ENCODE measurements at regions of chr1 and their contacts with region 1.

Region 1: DNA sequence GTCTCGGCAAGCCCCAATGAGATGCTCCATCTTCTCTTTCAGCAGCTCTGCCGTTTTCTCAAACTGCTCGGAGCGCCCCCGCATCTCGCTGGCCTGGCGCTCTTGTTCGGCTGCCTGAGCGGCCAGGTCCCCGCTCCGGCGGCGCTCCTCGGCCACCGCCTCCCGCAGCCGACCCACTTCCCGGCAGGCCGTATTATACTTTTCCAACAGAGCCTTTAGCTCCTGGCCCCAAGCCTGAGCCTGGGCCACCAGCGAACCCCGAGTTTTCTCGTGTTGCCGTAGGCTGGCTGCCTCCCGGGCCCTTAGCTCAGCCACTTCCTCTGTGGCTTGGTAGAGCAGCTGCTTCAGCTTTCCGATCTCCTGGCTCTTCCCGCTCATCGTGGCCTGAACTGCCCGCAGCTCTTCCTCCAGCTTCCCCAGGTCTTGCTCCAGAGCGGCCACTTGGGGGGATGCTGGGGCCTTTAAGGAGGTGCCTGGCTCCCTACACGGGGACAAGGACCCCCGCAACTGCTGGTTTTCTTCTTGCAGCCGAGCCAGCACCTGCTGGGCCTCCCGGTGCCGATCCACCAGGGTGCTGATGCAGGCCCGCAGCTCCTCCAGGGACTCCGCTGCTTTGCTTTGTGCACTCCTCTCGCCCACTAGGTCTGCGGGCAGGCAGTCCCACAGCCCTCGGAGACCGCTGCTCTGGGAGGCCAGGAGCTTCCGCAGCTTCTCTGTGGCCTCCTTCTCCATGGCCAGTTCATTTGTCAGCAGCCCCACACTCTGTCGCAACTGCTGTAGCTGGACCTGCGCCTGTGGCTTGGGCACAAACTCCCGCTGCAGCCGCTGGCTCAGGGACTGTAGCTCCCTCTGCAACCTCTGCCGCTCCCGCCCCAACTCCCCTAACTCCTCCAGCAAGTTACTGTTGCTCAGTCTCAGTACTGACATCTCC is 13.4 kb upstream of the PIAS3 start:
- DNase-seq: peak; percentile 31 to 70 (median 62)
- H3K4me3 ChIP-seq: peak overlapping the region; percentile 19 to 74 (median 58)
- H3K27ac ChIP-seq: peak overlapping the region in 1 of 2 experiments; percentile 33
- H3K4me1 ChIP-seq: peaks cover 0 to 25% (median 17%) of the 10 kb centered on the region in 4 experiments
- H3K27me3 ChIP-seq: peaks cover 0 to 2% (median 0%) of the 10 kb centered on the region in 5 experiments

Region 2: GRCh38 chr1:145601593-145601992 is 270.7 kb before region 1 on chr1:
- CTCF ChIA-PET with region 1: no interaction called
- POLR2A ChIA-PET with region 1: no interaction called
- DNase-seq: no peak
- H3K4me3 ChIP-seq: no peak overlapping the region
- H3K27ac ChIP-seq: no peak overlapping the region
- H3K4me1 ChIP-seq: no peaks in the 10 kb centered on the region
- H3K27me3 ChIP-seq: no peaks in the 10 kb centered on the region

Region 3: GRCh38 chr1:145751491-145752037 is 120.7 kb before region 1 on chr1:
- CTCF ChIA-PET with region 1: no interaction called
- POLR2A ChIA-PET with region 1: no interaction called
- DNase-seq: no peak
- H3K4me3 ChIP-seq: no peak overlapping the region
- H3K27ac ChIP-seq: no peak overlapping the region
- H3K4me1 ChIP-seq: no peaks in the 10 kb centered on the region
- H3K27me3 ChIP-seq: no peaks in the 10 kb centered on the region

Region 4: DNA sequence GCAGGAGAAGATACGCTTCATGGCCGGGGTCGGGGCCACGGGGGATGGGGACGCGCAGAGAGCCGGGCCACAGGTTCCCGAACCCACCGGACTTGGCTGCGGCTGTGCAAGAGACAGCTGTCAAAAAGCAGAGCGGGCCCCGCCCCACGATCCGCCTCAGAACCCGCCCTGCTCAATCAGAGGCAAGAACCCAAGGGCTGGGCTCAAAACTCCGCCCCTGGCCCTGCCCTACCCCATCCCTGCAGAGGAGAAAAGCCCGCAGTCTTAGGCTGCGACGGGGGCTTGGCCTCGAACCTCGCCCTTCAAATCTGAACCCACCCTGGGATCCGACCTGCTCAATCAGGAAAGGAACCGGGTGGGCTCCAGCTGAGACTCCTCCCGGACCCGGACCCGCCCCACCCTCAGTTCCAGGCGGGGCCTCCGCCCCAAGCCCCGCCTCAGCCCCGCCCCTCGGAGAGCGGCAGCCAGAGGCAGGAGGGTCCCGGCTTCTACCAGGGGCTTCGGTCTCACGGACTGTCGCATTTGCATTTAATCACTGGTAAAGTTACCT is 13.6 kb after region 1 on chr1 and contains the start of gene ANKRD35:
- CTCF ChIA-PET with region 1: interaction called, 19 read pairs
- POLR2A ChIA-PET with region 1: interaction called, 3 read pairs
- DNase-seq: peak; percentile 69 to 85 (median 84)
- H3K4me3 ChIP-seq: peak within 1 kb of the TSS; percentile 46 to 90 (median 74)
- H3K27ac ChIP-seq: no peak within 1 kb of the TSS
- H3K4me1 ChIP-seq: peaks cover 0 to 11% (median 9%) of the 10 kb centered on the region in 4 experiments
- H3K27me3 ChIP-seq: peaks cover 0 to 12% (median 2%) of the 10 kb centered on the region in 5 experiments

Region 5: GRCh38 chr1:145949219-145949618 is 77.0 kb after region 1 on chr1:
- CTCF ChIA-PET with region 1: no interaction called
- POLR2A ChIA-PET with region 1: no interaction called
- DNase-seq: no peak
- H3K4me3 ChIP-seq: no peak overlapping the region
- H3K27ac ChIP-seq: no peak overlapping the region
- H3K4me1 ChIP-seq: peaks cover 0 to 11% (median 3%) of the 10 kb centered on the region in 4 experiments
- H3K27me3 ChIP-seq: no peaks in the 10 kb centered on the region

Measured in common myeloid progenitor, CD34-positive (primary cell).